HAP-1 (cell line): ENCODE measurements at regions of chr3 and their contacts with region 1.

Region 1: DNA sequence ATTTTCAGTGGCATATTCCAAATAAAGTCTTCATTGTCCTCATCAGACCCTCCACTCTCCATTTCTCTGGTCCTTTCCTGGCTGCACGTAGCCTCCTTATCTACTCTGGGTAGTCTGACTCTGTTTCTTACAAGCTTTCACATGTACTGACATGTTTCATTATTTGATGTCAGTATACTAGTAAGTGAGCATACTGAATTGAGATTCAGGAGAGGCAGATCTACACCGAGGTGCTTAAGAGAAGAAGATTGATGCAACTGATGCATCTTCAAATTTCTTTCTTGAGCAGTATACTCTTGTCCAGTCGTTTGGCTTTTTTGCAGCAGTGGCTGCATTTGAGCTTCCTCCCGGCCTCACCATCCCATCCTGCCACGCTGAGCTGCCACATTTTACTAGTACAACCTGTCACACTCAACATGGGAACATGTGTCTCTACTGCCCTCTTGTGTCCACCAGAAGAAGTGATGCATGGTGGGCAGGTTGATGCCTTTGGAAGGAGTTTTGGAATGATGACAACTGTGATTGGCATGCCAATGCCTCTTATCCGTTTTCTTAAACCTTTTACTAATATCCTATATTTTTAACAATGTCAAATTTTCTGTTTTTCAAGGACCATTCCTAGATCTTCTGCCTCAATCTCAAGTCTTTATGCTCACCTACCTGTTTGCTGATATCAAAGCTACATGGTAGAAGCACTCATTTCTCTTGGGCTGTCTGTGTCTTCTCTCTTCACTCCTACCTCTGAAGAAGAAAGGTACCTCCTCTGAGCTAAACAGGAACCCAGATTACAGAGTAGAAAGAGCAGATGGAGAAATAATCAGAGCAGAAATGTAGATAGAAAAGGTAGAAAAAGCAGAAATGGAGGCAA is 38.7 kb downstream of the GUCA1C start:
- DNase-seq: peak; percentile 69 to 80
- H3K4me3 ChIP-seq: no peak overlapping the region
- H3K4me1 ChIP-seq: no peaks in the 10 kb centered on the region
- H3K27me3 ChIP-seq: peaks cover 2% of the 10 kb centered on the region; the same call in 1 of the 2 replicates

Region 2: DNA sequence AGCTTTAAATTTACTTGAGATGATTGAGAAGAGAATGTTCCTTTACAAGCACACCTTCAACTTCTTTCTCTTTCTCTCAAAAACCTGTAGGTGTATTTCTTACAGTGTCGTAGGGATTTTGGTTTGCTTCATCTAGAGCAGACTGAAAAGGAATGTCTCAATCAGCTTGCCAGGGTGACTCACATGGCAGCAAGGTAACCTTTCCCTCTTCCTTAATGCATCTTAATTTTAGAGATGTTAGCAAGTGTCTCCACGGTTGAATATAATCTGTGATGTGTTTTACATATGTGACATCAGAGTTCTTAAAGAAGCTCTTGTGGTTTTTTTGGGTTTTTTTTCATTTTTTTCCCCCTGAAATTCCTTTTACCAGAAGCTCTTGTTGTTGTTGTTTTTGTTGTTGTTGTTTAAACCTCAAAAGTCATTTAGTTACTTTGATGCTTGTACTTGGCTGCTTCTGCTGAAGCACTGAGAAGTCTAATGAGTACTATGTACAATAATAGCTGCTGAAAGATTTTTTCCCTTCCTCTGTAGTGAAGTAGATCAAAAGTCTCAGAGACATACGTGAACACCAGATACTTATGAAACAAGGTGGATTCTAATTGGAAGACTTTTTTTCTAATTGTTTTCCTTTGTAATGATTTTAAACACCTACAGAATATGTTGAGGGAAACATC is 240.9 kb before region 1 on chr3:
- in situ Hi-C with region 1: loop called (anchors 10 kb)
- DNase-seq: no peak
- H3K4me3 ChIP-seq: no peak overlapping the region
- H3K4me1 ChIP-seq: no peaks in the 10 kb centered on the region
- H3K27me3 ChIP-seq: no peaks in the 10 kb centered on the region

Region 3: GRCh38 chr3:109819734-109820133 is 904.7 kb after region 1 on chr3:
- in situ Hi-C with region 1: no loop called
- DNase-seq: peak; percentile 48 to 55
- H3K4me3 ChIP-seq: no peak overlapping the region
- H3K4me1 ChIP-seq: peaks cover 23% of the 10 kb centered on the region
- H3K27me3 ChIP-seq: no peaks in the 10 kb centered on the region